ENCODE measurements at regions of chr10 and their contacts with region 1.

Region 1: GRCh38 chr10:7687228-7687907 is 15.7 kb upstream of the ITIH2 start:
- DNase-seq: peak; percentile 77 to 80
- H3K4me3 ChIP-seq: no peak overlapping the region
- H3K27ac ChIP-seq: no peak overlapping the region
- H3K4me1 ChIP-seq: no peaks in the 10 kb centered on the region
- H3K27me3 ChIP-seq: no peaks in the 10 kb centered on the region
- CTCF ChIP-seq: peak; percentile 86 to 99 (median 95)
- EP300 ChIP-seq: peak in 1 of 2 experiments; percentile 22; a peak in 1 of 3 replicates
- POLR2A ChIP-seq: no peak
- RAD21 ChIP-seq: peak; percentile 96 to 98

Region 2: GRCh38 chr10:7378602-7379403 is 308.6 kb before region 1 on chr10:
- CTCF ChIA-PET with region 1: no interaction called
- POLR2A ChIA-PET with region 1: no interaction called
- DNase-seq: no peak
- H3K4me3 ChIP-seq: no peak overlapping the region
- H3K27ac ChIP-seq: no peak overlapping the region
- H3K4me1 ChIP-seq: no peaks in the 10 kb centered on the region
- H3K27me3 ChIP-seq: no peaks in the 10 kb centered on the region
- CTCF ChIP-seq: no peak
- EP300 ChIP-seq: no peak
- POLR2A ChIP-seq: no peak
- RAD21 ChIP-seq: no peak

Region 3: DNA sequence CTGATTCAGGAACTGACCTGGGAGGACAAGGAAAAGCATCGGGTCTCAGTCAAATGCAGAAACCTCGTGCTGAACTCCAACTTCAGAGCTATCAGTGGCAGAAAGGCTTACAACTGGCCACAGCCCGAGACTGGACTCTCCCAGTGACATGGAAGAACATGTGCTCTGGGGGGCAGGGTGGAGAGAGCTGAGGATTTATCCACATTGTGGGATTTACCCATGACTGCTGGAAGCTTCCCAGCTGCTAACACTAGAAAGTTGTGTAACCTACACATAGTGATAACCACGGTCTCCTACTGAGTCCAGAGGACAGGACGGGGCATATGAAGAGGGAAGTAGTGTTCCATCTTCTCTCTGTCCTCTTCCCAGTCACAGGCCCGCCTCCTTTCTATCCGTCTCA is 124.0 kb before region 1 on chr10:
- CTCF ChIA-PET with region 1: interaction called, 12 read pairs
- POLR2A ChIA-PET with region 1: no interaction called
- DNase-seq: no peak
- H3K4me3 ChIP-seq: no peak overlapping the region
- H3K27ac ChIP-seq: no peak overlapping the region
- H3K4me1 ChIP-seq: peaks cover 0 to 16% (median 5%) of the 10 kb centered on the region in 4 experiments; a peak in 5 of 7 replicates
- H3K27me3 ChIP-seq: no peaks in the 10 kb centered on the region
- CTCF ChIP-seq: no peak
- EP300 ChIP-seq: no peak
- POLR2A ChIP-seq: no peak
- RAD21 ChIP-seq: no peak

Region 4: DNA sequence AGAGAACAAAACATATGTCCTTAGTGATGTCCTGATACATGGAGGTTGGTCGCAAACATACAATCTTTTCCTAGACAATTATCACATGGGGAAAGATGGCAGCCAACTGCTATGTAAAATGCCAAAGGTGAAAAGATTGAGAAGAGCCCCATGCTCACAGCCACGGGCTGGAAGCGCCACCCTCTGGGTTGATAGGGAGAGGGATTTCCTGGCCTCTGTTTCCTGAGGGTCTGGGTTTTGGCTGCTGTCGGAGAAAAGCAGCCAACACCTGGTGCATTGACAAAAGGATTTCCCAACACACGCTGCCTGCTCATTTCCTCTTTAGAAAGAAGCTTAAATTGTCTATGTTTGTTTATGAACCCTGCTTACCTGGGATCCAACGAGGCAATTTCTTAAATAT is 64.4 kb before region 1 on chr10:
- CTCF ChIA-PET with region 1: interaction called, 20 read pairs
- POLR2A ChIA-PET with region 1: no interaction called
- DNase-seq: peak in 1 of 2 experiments; percentile 59
- H3K4me3 ChIP-seq: no peak overlapping the region
- H3K27ac ChIP-seq: no peak overlapping the region
- H3K4me1 ChIP-seq: peaks cover 0 to 3% (median 0%) of the 10 kb centered on the region in 4 experiments; a peak in 1 of 7 replicates
- H3K27me3 ChIP-seq: no peaks in the 10 kb centered on the region
- CTCF ChIP-seq: peak; percentile 63 to 81 (median 73)
- EP300 ChIP-seq: no peak
- POLR2A ChIP-seq: no peak
- RAD21 ChIP-seq: peak; percentile 88 to 90

Region 5: DNA sequence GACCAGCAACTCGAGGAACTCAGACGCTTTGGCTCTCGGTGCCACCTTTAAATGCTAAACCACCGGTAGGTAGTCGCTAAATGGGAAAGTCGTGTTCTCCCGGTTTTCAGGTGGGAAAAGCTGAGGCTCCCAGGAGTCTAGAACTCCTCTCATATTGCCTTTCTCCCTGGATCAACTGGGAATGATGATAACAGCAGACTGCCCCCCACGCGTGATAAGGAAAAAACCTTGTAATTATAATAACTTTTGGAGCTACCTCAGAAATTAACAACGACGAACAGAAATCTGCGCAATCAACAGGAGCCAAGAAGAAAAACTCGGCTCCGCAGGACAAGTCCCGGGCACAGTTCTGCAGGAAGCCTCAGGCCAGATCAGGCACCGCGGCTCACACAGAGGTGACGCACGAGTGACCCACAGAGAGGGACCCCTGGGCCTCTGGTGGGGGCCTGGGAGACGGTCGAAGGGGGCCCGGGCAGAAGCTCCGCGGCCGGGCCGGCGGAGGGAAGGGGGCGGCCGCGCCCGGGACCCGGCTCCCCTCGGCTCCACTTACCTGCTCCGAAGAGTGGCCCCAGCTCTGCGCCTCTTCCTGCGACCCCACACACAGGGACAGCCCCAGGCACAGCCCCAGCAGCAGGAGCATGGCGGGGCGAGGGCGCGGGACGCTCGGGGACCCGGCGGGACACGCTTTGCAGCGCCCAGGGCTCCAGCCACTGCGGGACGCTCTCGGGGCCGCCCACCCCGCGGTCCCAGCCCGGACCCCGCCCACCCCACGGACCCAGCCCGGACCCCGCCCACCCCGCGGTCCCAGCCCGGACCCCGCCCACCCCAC is 20.9 kb before region 1 on chr10 and contains the start of gene ITIH5:
- CTCF ChIA-PET with region 1: interaction called, 20 read pairs
- POLR2A ChIA-PET with region 1: interaction called, 3 read pairs
- DNase-seq: peak in 1 of 2 experiments; percentile 71
- H3K4me3 ChIP-seq: peak within 1 kb of the TSS; percentile 49 to 89 (median 70)
- H3K27ac ChIP-seq: no peak within 1 kb of the TSS
- H3K4me1 ChIP-seq: peaks cover 0 to 2% (median 0%) of the 10 kb centered on the region in 4 experiments; a peak in 2 of 7 replicates
- H3K27me3 ChIP-seq: peaks cover 0 to 20% (median 11%) of the 10 kb centered on the region in 4 experiments; a peak in 6 of 7 replicates
- CTCF ChIP-seq: no peak
- EP300 ChIP-seq: no peak
- POLR2A ChIP-seq: no peak
- RAD21 ChIP-seq: no peak
- total RNA-seq, gene ITIH5: 7.6 and 9.8 TPM in 2 replicates

Region 6: DNA sequence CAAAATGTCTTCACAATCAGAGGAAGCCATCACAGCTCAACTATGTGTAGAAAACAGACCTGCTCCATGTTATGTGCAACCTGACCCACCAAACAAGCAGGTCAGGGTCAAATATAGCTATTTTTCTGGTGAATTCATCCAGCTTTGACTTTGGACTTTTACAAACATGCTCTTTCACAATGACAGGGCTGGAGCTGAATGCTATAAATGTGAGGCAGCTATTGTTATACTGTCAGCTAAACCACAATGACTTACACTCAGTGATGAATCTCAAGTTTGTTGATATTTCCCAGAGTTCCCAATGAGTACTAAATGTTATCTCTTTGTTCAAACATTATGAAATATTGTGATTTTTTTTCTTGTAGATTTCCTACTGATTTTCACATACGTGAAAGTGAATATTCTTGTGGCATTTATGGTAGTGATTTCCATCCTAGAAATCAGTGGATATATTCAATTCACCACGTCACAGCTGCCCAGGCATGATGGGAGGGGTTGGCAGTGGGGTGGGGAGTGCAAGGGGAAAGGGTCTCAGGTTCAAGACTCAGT is 13.3 kb after region 1 on chr10:
- CTCF ChIA-PET with region 1: interaction called, 24 read pairs
- POLR2A ChIA-PET with region 1: no interaction called
- DNase-seq: no peak
- H3K4me3 ChIP-seq: no peak overlapping the region
- H3K27ac ChIP-seq: no peak overlapping the region
- H3K4me1 ChIP-seq: no peaks in the 10 kb centered on the region
- H3K27me3 ChIP-seq: no peaks in the 10 kb centered on the region
- CTCF ChIP-seq: no peak
- EP300 ChIP-seq: no peak
- POLR2A ChIP-seq: no peak
- RAD21 ChIP-seq: no peak

Region 7: GRCh38 chr10:7818295-7819122 is 131.1 kb after region 1 on chr10 and contains the start of gene TAF3:
- CTCF ChIA-PET with region 1: no interaction called
- POLR2A ChIA-PET with region 1: no interaction called
- DNase-seq: peak; percentile 61 to 96
- H3K4me3 ChIP-seq: peak within 1 kb of the TSS; percentile 74 to 100 (median 100)
- H3K27ac ChIP-seq: peak within 1 kb of the TSS; percentile 76; the same call in 1 of the 2 replicates
- H3K4me1 ChIP-seq: peaks cover 0 to 7% (median 2%) of the 10 kb centered on the region in 4 experiments; a peak in 3 of 7 replicates
- H3K27me3 ChIP-seq: no peaks in the 10 kb centered on the region
- CTCF ChIP-seq: no peak
- EP300 ChIP-seq: no peak; a peak in 1 of 3 replicates
- POLR2A ChIP-seq: peak; percentile 84 to 92
- RAD21 ChIP-seq: no peak
- total RNA-seq, gene TAF3: 10.7 and 11.2 TPM in 2 replicates

Region 8: GRCh38 chr10:8006274-8006999 is 319.1 kb after region 1 on chr10:
- CTCF ChIA-PET with region 1: no interaction called
- POLR2A ChIA-PET with region 1: no interaction called
- DNase-seq: no peak
- H3K4me3 ChIP-seq: no peak overlapping the region
- H3K27ac ChIP-seq: no peak overlapping the region
- H3K4me1 ChIP-seq: no peaks in the 10 kb centered on the region
- H3K27me3 ChIP-seq: no peaks in the 10 kb centered on the region
- CTCF ChIP-seq: no peak
- EP300 ChIP-seq: no peak
- POLR2A ChIP-seq: no peak
- RAD21 ChIP-seq: no peak